Gastrocnemius medialis (tissue), 4 donors: ENCODE measurements at regions of chr9 and their contacts with region 1.

Region 1: DNA sequence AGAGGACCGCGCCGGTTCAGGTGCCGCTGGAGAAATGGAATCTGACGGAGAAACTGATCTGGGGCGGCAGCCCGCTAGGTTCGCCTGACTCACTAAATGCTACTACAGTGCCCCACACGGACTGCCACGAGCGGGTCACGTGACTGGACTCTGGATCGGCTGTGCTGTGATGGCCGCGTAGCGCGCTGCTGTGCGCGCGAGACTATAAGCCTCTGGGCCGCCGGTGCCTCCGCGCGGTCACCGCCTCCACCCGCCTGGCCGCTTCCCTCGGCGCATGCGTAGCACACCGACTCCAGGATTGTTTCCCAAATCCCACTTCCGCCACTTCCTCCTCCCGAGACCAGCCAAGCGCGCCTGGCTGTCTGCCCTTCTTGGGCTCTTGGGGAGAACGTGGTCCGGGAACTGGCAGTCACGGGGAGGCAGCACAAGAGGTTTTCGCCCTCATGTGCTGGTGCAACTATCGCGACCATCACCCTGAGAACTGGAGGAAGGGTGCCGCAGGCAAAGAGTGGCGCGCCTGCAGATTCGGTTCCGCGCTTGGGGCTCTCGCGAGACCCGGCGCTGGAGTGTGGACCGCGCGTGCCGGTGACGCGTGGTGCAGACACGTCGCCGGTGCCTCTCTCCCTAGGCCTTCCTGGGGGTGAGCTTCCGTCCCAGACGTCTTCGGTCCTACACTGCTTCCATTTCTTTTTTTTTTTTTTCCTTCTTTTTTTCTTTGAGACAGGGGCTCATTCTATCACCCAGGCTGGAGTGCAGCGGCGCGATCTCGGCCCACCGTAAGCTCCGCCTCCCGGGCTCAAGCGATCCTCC is 35.8 kb upstream of the GLDC start:
- DNase-seq: peak; percentile 89 to 97
- ATAC-seq: peak; percentile 93 to 94
- H3K4me3 ChIP-seq: peak overlapping the region; percentile 68 to 82 (median 70)
- H3K27ac ChIP-seq: peak overlapping the region; percentile 91 to 98 (median 94)
- H3K4me1 ChIP-seq: no peaks in the 10 kb centered on the region
- H3K27me3 ChIP-seq: no peaks in the 10 kb centered on the region
- CTCF ChIP-seq: peak in 2 of 5 experiments; percentile 43 to 50
- POLR2A ChIP-seq: peak; percentile 63 to 76

Region 2: GRCh38 chr9:6412487-6413364 is 268.6 kb before region 1 on chr9 and contains the start of gene UHRF2:
- in situ Hi-C with region 1: no loop called
- intact Hi-C with region 1: loop called (anchors 1 kb)
- DNase-seq: peak; percentile 96 to 98
- ATAC-seq: peak; percentile 95 to 96
- H3K4me3 ChIP-seq: peak within 1 kb of the TSS; percentile 80 to 86 (median 84)
- H3K27ac ChIP-seq: peak within 1 kb of the TSS; percentile 80 to 86 (median 83)
- H3K4me1 ChIP-seq: peaks cover 18 to 21% of the 10 kb centered on the region in 2 donors
- H3K27me3 ChIP-seq: no peaks in the 10 kb centered on the region
- CTCF ChIP-seq: peak in 1 of 5 experiments; percentile 15
- POLR2A ChIP-seq: peak; percentile 62 to 89
- total RNA-seq, gene UHRF2: 16.7 to 29.0 (median 18.8) TPM

Region 3: GRCh38 chr9:6645355-6646292 is 35.7 kb before region 1 on chr9 and contains the start of gene GLDC:
- in situ Hi-C with region 1: no loop called
- intact Hi-C with region 1: loop called (anchors 2 kb)
- DNase-seq: peak; percentile 41 to 69
- ATAC-seq: peak; percentile 89 to 91
- H3K4me3 ChIP-seq: peak within 1 kb of the TSS; percentile 53 to 65 (median 59)
- H3K27ac ChIP-seq: peak within 1 kb of the TSS; percentile 28 to 61 (median 58)
- H3K4me1 ChIP-seq: peaks cover 6 to 7% of the 10 kb centered on the region in 2 donors
- H3K27me3 ChIP-seq: peaks cover 0 to 22% (median 12%) of the 10 kb centered on the region in 3 donors
- CTCF ChIP-seq: no peak
- POLR2A ChIP-seq: peak; percentile 29 to 37
- total RNA-seq, gene GLDC: 0.31 to 1.00 (median 0.47) TPM

Region 4: DNA sequence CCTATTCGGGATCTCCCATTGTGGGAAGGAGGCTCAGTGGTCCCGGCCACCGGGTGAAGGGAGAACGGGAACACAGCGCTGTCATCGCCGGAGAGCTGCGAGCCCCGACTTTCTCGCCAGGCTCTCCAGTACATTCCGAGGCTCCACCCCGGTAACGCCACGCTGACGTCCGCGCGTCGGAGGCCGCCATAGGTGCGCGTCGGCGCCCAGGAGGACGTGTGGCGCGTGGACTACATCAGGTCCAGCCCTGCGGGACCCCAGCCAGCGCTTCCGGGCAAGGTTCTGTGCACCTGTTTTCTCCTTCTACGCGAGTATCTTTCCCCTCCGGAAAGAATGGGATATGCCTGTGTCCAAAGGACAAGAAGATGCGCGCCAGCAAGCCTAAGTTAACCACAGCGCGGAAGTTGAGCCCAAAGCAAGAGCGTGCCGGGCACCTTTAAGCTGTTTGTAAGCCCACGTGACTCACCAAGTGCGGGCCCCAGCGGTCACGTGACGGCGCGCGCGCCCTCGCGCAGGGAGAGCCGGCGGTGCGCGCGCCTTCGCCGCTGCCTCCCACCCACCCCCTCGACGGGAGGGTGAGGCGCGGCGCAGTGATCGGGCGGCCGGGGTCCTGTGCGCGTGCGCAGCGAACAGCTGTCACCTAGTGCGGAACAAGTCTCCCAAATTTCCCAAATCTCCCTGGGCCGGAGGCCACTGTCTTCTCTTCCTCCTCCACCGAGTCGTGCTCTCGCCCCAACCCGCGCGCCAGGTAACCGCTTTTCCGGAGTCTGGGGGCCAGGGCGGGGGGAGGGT is 76.3 kb after region 1 on chr9 and contains the start of gene KDM4C:
- in situ Hi-C with region 1: no loop called
- intact Hi-C with region 1: loop called (anchors 1 kb)
- DNase-seq: peak; percentile 90 to 96
- ATAC-seq: peak; percentile 88 to 92
- H3K4me3 ChIP-seq: peak within 1 kb of the TSS; percentile 81 to 100 (median 94)
- H3K27ac ChIP-seq: peak within 1 kb of the TSS; percentile 94 to 100 (median 98)
- H3K4me1 ChIP-seq: peaks cover 6 to 10% of the 10 kb centered on the region in 2 donors
- H3K27me3 ChIP-seq: no peaks in the 10 kb centered on the region
- CTCF ChIP-seq: peak in 2 of 5 experiments; percentile 40 to 63
- POLR2A ChIP-seq: peak; percentile 88 to 97
- total RNA-seq, gene KDM4C: 7.7 to 23.3 (median 10.0) TPM